Gastrocnemius medialis (tissue), 4 donors: ENCODE measurements at regions of chr3 and their contacts with region 1.

Region 1: GRCh38 chr3:72114773-72115172 is 329.8 kb upstream of the PROK2 start:
- DNase-seq: peak; percentile 56 to 76
- ATAC-seq: peak; percentile 94 to 97
- H3K4me3 ChIP-seq: no peak overlapping the region
- H3K27ac ChIP-seq: peak overlapping the region; percentile 47 to 62 (median 54)
- H3K4me1 ChIP-seq: peaks cover 15 to 25% of the 10 kb centered on the region in 2 donors
- H3K27me3 ChIP-seq: no peaks in the 10 kb centered on the region
- CTCF ChIP-seq: no peak
- POLR2A ChIP-seq: no peak

Region 2: DNA sequence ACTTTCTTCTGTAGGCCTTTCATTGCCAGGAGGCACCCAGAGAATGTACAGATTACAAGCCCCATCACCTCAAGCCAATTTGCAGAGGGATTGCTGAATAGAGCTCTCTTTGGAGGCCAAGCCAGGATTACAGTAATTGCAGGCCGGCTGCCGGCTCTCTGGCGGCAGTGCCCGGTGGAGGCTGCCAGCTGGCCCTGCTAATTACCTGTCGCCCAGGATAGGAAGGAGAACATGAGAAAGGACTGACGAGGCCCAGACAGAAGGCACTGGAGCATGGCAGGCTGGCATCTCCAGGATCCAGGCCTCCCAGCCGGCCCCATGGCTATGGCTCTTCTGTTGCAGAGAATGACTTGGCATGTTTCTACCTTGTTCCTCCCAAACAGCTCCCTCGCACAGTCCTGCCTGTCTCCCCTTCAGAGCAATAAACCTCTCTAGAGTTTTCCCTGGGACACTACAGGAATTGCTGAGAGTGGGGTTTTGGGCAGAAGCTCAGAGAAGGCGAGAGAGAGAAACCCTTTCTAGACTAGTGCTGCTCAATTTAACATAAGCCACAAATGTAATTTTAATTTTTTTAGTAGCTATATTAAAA is 56.2 kb before region 1 on chr3:
- in situ Hi-C with region 1: no loop called
- intact Hi-C with region 1: loop called (anchors 1 kb)
- DNase-seq: peak; percentile 65 to 83
- ATAC-seq: peak; percentile 95 to 97
- H3K4me3 ChIP-seq: no peak overlapping the region
- H3K27ac ChIP-seq: peak overlapping the region in 3 of 4 donors; percentile 55 to 69 (median 59)
- H3K4me1 ChIP-seq: peaks cover 0 to 7% of the 10 kb centered on the region in 2 donors
- H3K27me3 ChIP-seq: no peaks in the 10 kb centered on the region
- CTCF ChIP-seq: no peak
- POLR2A ChIP-seq: no peak